WTC11 (cell line): ENCODE measurements at regions of chr17 and their contacts with region 1.

Region 1: DNA sequence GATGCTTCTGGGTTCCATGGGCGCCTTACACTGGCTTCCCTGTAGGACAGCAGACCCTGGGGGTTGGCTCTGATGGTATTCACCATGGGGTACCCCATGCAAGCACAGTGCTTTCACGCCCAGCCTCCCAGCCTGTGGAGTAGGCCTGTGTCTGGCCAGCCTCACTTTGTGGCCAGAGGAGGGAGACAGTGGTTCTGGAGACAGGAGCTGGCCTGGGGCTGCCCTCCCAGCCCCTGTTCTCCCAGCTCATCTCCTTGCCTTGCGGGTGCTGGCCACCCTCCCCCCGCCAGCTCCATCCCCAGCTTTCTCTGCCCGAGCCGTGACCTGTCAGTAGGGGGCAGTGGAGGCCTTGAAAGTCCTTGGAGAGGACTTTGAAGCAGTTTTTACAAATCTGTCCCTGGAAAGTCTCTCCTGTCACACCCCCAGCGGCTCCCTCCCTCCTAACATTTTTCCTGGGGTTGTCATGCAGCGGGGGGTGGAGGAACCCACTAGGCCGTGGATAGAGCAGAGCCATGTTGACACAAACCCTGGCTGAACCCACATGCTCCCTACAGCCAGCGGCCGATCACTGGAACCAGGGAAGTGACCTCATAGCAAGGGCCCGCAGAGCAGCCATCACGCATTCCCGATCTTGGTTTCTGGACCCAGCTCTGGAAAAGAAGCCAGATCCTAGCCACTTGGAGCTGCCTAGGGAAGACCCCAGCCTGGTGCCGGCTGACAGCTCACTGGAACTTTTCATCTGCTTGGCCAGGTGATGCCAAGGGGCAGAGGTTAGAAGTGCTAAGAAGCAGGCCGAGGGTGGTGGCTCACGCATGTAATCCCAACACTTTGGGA is 289.4 kb downstream of the SEC14L1 start:
- DNase-seq: peak; percentile 95
- ATAC-seq: peak; percentile 81
- H3K4me3 Mint-ChIP-seq: no peak overlapping the region
- H3K27ac Mint-ChIP-seq: no peak overlapping the region
- H3K4me1 Mint-ChIP-seq: peaks cover 76% of the 10 kb centered on the region
- H3K27me3 Mint-ChIP-seq: no peaks in the 10 kb centered on the region
- CTCF ChIP-seq: peak; percentile 67

Region 2: DNA sequence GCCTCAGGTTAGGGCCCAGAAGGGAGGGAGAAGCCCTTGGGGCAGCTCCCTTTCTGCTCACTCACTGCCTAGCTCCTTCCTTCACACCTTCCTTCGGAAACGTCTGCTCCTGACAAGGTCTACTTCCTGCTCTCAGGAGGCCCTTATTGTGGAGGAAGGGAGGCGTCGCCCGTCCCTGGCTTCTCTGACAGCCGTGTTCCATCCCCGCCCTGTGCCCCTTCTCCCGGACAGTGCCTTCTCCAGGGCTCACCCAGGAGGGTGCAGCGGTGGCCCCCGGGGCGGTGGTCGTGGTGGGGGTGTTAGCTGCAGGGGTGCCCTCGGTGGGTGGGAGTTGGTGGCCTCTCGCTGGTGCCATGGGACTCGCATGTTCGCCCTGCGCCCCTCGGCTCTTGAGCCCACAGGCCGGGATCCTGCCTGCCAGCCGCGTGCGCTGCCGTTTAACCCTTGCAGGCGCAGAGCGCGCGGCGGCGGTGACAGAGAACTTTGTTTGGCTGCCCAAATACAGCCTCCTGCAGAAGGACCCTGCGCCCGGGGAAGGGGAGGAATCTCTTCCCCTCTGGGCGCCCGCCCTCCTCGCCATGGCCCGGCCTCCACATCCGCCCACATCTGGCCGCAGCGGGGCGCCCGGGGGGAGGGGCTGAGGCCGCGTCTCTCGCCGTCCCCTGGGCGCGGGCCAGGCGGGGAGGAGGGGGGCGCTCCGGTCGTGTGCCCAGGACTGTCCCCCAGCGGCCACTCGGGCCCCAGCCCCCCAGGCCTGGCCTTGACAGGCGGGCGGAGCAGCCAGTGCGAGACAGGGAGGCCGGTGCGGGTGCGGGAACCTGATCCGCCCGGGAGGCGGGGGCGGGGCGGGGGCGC is 57.5 kb before region 1 on chr17:
- CTCF ChIA-PET with region 1: interaction called, 45 read pairs
- POLR2A ChIA-PET with region 1: interaction called, 3 read pairs
- DNase-seq: peak; percentile 88
- ATAC-seq: peak; percentile 67
- H3K4me3 Mint-ChIP-seq: peak overlapping the region; percentile 66
- H3K27ac Mint-ChIP-seq: no peak overlapping the region
- H3K4me1 Mint-ChIP-seq: peaks cover 63% of the 10 kb centered on the region
- H3K27me3 Mint-ChIP-seq: no peaks in the 10 kb centered on the region
- CTCF ChIP-seq: no peak

Region 3: DNA sequence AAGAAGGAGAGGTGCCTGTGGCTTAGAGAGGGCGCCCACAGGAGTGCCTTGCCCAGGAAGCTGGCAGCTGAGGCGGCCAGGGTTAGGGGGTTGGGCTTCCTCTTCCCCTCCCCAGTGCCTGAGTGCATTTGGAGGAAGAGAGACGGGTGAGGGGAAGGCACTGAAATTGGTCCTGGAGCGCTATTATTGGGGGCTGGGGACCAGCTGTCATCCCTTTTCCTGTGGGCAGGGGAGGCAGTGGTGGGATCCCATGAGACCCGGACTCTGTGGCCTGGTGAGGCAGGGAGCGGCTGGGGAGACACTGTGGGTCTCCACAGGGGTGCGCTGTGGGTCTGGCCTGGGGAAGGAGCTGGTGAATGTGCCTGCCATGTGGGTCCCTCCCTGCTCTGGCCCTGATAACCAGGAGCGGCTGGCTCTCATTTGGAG is 29.7 kb before region 1 on chr17:
- CTCF ChIA-PET with region 1: interaction called, 26 read pairs
- POLR2A ChIA-PET with region 1: interaction called, 3 read pairs
- DNase-seq: peak; percentile 67
- ATAC-seq: peak; percentile 84
- H3K4me3 Mint-ChIP-seq: no peak overlapping the region
- H3K27ac Mint-ChIP-seq: peak overlapping the region; percentile 73; the same call in 1 of the 2 replicates
- H3K4me1 Mint-ChIP-seq: peaks cover 28% of the 10 kb centered on the region
- H3K27me3 Mint-ChIP-seq: no peaks in the 10 kb centered on the region
- CTCF ChIP-seq: no peak

Region 4: DNA sequence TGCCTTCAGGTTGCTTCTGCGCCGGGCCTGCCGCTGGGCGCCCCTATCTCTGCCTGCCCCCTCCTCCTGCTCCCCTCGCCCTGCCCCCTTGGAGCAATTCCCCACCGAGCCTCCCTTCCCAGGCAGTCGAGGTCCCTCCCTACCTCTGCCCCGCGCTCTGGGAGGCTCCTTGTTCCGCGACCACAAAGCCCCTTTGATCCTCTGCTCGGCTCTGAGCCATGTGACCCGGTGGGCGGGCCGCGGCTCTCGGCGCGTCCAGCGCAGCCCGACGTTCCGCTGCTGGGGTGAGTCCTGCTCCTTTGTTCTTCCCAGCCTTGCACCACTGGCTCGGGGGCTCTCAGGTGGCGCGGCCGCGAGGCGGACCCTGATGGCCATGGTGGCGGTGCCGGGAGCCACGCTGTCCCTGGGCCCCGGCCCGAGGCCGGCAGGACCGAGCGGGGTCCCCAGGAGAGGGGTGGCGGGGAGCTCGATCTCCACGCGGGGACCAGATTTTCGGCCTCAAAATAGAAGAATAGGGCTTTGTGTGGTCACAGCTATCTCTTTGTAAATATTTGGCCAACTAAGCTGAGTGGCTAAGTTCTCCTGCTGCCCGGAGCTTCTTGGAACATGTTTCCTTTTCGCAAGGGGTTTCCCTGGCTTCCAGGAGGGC is 21.2 kb after region 1 on chr17:
- CTCF ChIA-PET with region 1: interaction called, 81 read pairs
- POLR2A ChIA-PET with region 1: interaction called, 3 read pairs
- DNase-seq: peak; percentile 84
- ATAC-seq: peak; percentile 80
- H3K4me3 Mint-ChIP-seq: peak overlapping the region; percentile 84
- H3K27ac Mint-ChIP-seq: peak overlapping the region; percentile 83
- H3K4me1 Mint-ChIP-seq: peaks cover 69% of the 10 kb centered on the region
- H3K27me3 Mint-ChIP-seq: no peaks in the 10 kb centered on the region
- CTCF ChIP-seq: no peak

Region 5: DNA sequence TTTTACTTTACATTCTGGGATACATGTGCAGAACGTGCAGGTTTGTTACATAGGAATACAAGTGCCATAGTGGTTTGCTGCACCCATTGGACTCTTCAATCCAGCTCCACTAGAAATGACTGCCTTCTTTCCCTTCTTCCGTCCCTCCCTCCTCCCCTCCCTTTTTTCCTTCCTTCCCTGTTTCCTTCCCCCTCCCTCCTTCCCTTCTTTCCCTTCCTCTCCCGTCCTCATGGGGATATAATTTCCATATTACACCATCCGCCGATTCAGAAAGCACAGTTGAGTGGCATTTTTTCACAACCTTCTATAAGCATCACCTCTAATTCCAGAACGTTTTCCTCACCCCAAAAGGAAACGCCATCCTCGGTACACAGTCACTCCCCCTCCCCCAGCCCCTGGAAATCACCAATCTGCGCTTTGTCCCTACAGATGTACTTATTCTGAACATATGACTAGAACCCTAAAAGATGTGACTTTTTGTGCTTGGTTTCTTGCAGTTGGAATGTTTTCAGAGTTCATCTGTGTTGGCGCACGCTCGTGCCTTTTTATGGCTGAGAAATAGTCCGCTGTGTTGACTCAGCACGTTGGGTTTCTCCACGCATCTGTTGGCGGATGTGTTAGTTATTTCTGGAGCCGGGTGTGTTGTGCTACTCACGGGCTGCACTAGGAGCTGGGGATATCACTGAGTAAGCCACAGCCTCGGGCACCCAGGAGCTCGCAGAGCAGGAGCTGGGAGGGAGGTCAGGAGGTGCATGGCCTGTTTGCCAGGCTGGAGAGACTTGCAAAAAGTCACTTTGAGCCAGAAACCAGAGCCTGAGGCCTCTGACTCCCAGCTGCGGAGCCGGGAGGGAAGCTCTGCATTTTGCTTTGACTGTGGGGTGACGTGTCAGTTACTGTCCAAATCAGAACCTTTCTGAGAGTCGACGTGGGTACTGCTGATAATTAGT is 47.1 kb after region 1 on chr17:
- CTCF ChIA-PET with region 1: interaction called, 51 read pairs
- POLR2A ChIA-PET with region 1: interaction called, 3 read pairs
- DNase-seq: no peak
- ATAC-seq: no peak
- H3K4me3 Mint-ChIP-seq: no peak overlapping the region
- H3K27ac Mint-ChIP-seq: peak overlapping the region; percentile 54
- H3K4me1 Mint-ChIP-seq: peaks cover 83% of the 10 kb centered on the region
- H3K27me3 Mint-ChIP-seq: no peaks in the 10 kb centered on the region
- CTCF ChIP-seq: no peak

Region 6: DNA sequence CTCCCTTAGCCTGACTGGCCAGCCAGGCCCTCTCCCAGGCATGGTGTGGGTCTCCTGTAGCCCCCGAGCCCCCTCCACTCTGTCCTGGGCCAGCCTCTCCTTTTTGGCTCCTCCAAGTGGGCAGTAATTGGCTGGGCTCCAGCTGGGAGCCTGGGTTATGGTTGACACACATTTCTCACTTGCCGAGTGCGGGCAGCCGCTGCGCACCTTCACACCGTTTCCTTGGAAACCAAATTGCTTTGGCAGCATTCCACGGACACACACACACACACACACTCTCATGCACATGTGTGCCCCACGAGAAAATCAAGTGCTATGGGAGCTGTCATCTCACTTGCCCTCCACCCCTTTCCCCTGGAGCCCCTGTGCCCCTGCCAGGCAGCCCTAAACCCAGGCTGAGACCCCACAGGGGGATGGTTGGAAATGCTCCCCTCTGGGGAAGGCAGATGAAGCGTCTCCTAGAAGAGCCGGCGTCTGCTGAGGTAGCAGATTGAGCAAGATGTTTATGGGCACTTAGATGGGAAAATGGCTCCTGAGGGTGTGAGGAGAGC is 125.7 kb after region 1 on chr17:
- CTCF ChIA-PET with region 1: no interaction called
- POLR2A ChIA-PET with region 1: no interaction called
- DNase-seq: no peak
- ATAC-seq: no peak
- H3K4me3 Mint-ChIP-seq: no peak overlapping the region
- H3K27ac Mint-ChIP-seq: no peak overlapping the region
- H3K4me1 Mint-ChIP-seq: 0 out of 2 replicates have a peak, but pooled peaks cover 5% of the 10 kb centered on the region
- H3K27me3 Mint-ChIP-seq: no peaks in the 10 kb centered on the region
- CTCF ChIP-seq: no peak

Region 7: DNA sequence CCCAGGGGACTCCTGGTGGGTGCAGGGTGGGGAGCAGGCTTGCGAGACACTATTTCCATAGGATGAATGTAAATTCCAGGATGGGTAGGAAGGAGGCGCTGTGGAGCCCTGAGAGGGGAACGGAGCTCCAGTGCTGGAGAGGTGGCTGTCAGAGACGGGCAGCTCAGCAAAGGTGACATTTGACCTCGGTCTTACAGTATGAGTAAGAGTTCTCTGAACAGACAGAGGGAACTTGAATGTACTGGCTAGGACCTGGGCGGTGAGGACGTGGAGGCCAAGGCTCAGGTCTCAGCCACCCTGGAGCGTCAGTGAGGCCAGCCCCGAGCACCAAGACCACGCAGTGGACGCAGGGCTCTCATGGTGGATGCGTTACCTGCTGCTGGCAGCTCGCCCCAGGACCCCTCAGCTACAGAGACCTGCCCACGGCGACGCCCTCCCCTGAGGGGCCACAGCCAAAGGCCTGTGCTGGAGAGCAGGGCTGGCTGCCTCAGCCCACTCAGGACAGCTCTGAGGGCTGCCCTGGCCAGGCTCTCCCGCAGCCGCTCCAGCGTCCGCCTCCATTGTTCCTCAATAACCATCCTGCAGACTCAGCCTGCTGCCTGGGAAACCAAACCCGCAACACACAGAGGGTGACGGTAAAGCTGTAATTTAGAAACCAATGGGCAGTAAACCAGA is 462.5 kb after region 1 on chr17:
- CTCF ChIA-PET with region 1: interaction called, 10 read pairs
- POLR2A ChIA-PET with region 1: no interaction called
- DNase-seq: peak; percentile 84
- ATAC-seq: peak; percentile 88
- H3K4me3 Mint-ChIP-seq: no peak overlapping the region
- H3K27ac Mint-ChIP-seq: no peak overlapping the region
- H3K4me1 Mint-ChIP-seq: peaks cover 18% of the 10 kb centered on the region
- H3K27me3 Mint-ChIP-seq: peaks cover 13% of the 10 kb centered on the region
- CTCF ChIP-seq: peak; percentile 82